ENCODE measurements at regions of chr21 and their contacts with region 1.

Region 1: GRCh38 chr21:32494934-32495703 is 82.6 kb downstream of the EVA1C start:
- DNase-seq: peak in 1 of 2 donors; percentile 55
- ATAC-seq: peak; percentile 48
- H3K4me3 ChIP-seq: no peak overlapping the region
- H3K27ac ChIP-seq: peak overlapping the region; percentile 16 to 89
- H3K4me1 ChIP-seq: peaks cover 0 to 6% of the 10 kb centered on the region in 2 donors
- H3K27me3 ChIP-seq: no peaks in the 10 kb centered on the region

Region 2: GRCh38 chr21:32569261-32570230 is 74.4 kb after region 1 on chr21:
- intact Hi-C with region 1: loop called in 1 of 2 experiments (anchors 10 kb)
- DNase-seq: peak; percentile 84 to 90
- ATAC-seq: peak; percentile 93
- H3K4me3 ChIP-seq: peak overlapping the region; percentile 24 to 67
- H3K27ac ChIP-seq: peak overlapping the region in 1 of 2 donors; percentile 76
- H3K4me1 ChIP-seq: peaks cover 4% of the 10 kb centered on the region in 2 donors
- H3K27me3 ChIP-seq: no peaks in the 10 kb centered on the region